ENCODE measurements at regions of chr1 and their contacts with region 1.

Region 1: DNA sequence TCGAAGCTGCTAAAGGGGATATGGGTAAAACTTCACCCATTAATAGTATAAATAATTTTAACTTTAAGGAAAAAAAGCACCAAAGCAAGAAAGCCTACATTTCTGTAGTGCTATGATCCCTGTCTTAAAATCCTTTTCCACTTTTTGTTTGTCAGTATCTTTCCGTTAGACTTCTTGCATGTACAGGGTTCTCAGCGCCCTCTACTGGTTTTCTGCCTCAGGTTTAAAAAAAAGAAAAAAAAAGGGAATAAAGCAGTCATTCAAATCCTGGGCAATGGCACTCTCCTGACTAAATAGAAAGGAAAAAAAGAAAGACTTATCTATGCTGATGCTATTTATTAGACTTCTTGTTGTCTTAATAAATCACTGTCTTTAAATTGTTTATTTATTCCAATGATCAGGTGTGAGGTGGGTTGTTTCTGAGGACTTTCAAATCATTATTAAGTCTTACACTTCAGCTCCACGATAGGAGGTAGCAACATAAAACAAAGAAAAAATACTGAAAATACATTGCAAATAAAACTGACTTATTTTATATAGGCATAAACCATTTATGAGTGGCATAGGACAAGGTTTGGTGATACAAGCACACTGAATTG is 475.4 kb upstream of the NR5A2 start:
- DNase-seq: peak in 4 of 10 donors; percentile 17 to 56 (median 32)
- H3K4me3 ChIP-seq: peak overlapping the region in 1 of 59 donors; percentile 1
- H3K27ac ChIP-seq: no peak overlapping the region
- H3K27me3 ChIP-seq: no peaks in the 10 kb centered on the region
- CTCF ChIP-seq: peak; percentile 56 to 91 (median 80)

Region 2: DNA sequence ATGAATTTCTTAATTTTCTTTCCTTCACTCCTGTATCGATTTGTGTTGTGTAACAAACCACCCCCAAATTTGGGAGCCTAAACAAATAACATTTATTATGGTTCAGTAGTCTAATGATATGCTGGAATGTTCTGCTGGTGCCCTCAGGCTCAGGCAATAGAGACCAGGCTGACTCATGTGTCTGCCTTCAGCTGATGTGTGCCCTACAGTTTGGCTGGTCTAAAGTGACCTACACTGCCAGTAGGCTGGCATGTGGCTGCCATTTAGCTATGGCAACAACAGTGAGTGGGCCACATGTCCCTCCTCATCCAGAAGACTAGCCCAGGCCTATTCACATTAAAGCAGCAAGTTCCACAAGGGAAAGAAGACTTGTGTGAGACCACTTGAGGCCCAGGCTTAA is 797.4 kb before region 1 on chr1:
- intact Hi-C with region 1: loop called in 1 of 2 experiments (anchors 5 kb)
- DNase-seq: no peak
- H3K4me3 ChIP-seq: no peak overlapping the region
- H3K27ac ChIP-seq: no peak overlapping the region
- H3K27me3 ChIP-seq: no peaks in the 10 kb centered on the region
- CTCF ChIP-seq: no peak

Region 3: DNA sequence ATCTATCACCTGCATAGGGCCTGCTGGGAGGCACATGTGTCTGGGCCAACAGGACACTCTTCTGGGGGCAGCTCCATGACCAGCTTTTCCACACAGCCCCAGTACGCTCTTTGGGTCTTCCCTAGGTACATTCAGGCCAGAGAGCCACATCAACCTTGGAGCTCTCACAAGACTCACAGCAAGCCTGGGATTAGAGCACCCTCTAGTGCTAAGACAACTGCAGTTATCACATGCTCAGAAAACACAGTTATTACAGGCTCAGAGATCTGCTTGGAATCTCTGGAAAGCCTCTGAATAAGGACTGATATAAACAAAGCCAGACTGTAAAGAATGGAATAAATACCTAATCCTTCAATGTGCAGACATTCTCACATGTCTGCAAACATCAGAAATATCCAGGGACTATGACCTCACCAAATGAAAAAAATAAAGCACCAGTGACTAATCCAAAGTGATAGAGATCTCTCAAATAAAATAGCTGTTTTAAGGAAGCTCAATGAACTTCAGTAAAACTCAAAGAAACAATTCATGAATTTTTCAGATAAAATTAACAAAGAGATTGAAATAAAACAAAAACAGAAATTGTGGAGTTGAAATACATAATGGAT is 88.4 kb before region 1 on chr1:
- intact Hi-C with region 1: no loop called
- DNase-seq: no peak
- H3K4me3 ChIP-seq: no peak overlapping the region
- H3K27ac ChIP-seq: no peak overlapping the region
- H3K27me3 ChIP-seq: no peaks in the 10 kb centered on the region
- CTCF ChIP-seq: no peak

Measured in dorsolateral prefrontal cortex (tissue), 120 donors.